Psoas muscle (tissue), 8 donors: ENCODE measurements at regions of chr19 and their contacts with region 1.

Region 1: DNA sequence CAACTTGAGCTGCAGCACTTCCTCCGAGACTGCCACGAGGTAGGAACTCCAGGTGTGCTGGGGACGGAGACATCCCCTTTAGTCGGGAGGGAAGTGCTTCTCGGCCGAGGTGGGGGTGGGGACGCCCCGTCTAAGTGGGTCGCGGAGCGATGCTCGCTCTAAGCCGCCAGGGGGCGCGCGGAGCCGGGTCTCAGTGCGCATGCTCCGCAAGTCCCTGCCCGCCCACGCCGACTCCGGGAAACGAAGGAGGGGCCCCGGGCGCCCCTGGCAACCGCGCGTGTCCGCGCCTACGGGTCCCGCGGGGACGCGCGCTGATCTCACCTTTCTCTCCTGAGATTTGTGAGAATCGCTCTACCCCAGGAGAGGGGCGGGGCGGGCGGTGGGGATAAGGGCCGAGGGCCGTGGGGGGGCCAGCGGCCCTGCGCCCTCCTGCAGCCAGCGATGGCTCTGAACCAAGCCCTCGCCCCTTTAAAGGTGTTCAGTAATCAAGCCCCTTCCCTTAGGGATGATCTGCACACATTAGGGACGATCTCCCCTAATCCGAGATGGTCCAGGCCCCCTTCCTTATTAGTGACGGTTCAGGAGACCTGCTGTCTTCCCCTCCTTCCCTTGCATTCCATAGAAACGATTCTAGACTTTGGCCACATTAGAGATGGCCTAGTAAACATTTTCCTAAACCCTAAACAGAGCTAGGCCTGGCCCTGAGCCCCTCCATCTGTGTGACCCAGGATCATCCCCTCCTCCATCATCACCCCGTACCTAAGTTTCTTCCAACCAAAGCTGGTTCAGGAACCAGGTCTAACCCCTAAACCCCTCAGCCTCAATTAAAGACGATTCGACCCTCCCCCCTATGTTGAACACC is 47.3 kb upstream of the SHKBP1 start:
- DNase-seq: peak; percentile 85 to 91
- ATAC-seq: peak; percentile 91 to 96 (median 93)
- H3K4me3 ChIP-seq: peak overlapping the region; percentile 70
- H3K27ac ChIP-seq: no peak overlapping the region
- H3K4me1 ChIP-seq: no peaks in the 10 kb centered on the region
- H3K27me3 ChIP-seq: no peaks in the 10 kb centered on the region
- CTCF ChIP-seq: peak; percentile 94

Region 2: DNA sequence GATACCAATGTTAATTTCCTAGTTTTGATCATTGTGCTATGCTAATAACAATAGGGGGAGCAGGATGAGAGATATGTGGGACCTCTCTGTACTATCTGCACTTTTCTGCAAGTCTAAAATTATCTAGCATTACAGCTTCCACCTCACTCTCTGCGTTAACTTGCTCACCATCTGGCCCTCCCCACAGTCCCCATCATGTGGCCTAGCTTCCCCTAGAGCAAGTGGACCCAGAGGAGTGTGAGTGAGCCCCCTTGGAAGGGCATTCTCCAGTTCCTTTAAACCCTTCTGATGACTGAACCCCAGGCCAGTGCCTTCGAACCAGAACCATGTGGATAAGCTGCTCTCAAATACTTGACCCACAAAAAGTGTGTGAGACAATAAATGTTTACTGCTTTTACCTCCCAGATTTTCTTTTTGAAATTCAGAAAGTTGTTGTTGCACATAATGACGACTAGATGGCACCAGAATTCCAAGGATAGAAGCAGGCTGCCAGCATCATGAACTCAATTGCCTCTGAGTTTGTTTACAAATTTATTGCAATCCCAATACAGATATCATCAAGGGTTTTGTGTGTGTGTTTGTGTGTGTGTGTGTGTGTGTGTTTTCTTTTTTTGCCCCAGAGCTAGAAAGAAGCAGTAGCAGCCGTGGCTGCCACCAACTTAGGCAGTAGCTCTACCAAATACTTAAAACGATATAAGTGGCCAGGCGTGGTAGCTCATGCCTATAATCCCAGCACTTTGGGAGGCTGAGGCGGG is 389.6 kb before region 1 on chr19:
- intact Hi-C with region 1: loop called in 1 of 2 experiments (anchors 10 kb)
- DNase-seq: no peak
- ATAC-seq: peak in 2 of 4 donors; percentile 22 to 76
- H3K4me3 ChIP-seq: no peak overlapping the region
- H3K27ac ChIP-seq: no peak overlapping the region
- H3K4me1 ChIP-seq: peaks cover 6% of the 10 kb centered on the region
- H3K27me3 ChIP-seq: peaks cover 0 to 2% (median 2%) of the 10 kb centered on the region in 3 donors
- CTCF ChIP-seq: peak; percentile 66

Region 3: DNA sequence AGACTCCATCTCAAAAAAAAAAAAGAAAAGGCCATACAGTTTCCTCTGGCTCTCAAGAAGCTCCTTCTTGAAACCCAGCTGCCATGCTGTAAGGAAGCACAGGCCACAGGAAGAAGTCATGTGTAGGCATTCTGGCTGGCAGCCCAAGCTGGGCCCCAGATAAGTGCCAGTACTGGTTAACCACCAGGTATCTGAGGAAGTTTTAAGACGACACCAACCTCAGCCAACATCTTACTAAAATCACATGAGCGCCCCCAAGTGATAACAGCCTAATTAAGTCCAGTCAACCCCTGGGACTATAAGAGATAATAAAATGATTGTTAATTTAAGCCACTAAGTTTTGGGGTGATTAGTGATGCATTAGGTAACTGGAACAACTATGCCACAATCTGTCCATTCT is 216.8 kb before region 1 on chr19:
- intact Hi-C with region 1: loop called in 1 of 2 experiments (anchors 10 kb)
- DNase-seq: no peak
- ATAC-seq: no peak
- H3K4me3 ChIP-seq: no peak overlapping the region
- H3K27ac ChIP-seq: no peak overlapping the region
- H3K4me1 ChIP-seq: no peaks in the 10 kb centered on the region
- H3K27me3 ChIP-seq: no peaks in the 10 kb centered on the region
- CTCF ChIP-seq: no peak

Region 4: GRCh38 chr19:40403262-40403984 is 125.9 kb before region 1 on chr19:
- intact Hi-C with region 1: loop called in 1 of 2 experiments (anchors 5 kb)
- DNase-seq: peak; percentile 91 to 92
- ATAC-seq: peak; percentile 77 to 84 (median 82)
- H3K4me3 ChIP-seq: peak overlapping the region; percentile 70
- H3K27ac ChIP-seq: peak overlapping the region; percentile 80
- H3K4me1 ChIP-seq: no peaks in the 10 kb centered on the region
- H3K27me3 ChIP-seq: no peaks in the 10 kb centered on the region
- CTCF ChIP-seq: no peak

Region 5: GRCh38 chr19:40603389-40604135 is 74.2 kb after region 1 on chr19:
- intact Hi-C with region 1: loop called (anchors 5 kb)
- DNase-seq: peak; percentile 97 to 98
- ATAC-seq: peak; percentile 80 to 85 (median 85)
- H3K4me3 ChIP-seq: peak overlapping the region; percentile 67
- H3K27ac ChIP-seq: peak overlapping the region; percentile 60
- H3K4me1 ChIP-seq: peaks cover 45% of the 10 kb centered on the region
- H3K27me3 ChIP-seq: peaks cover 0 to 22% (median 10%) of the 10 kb centered on the region in 3 donors
- CTCF ChIP-seq: no peak